ENCODE measurements at regions of chrX and their contacts with region 1.

Region 1: DNA sequence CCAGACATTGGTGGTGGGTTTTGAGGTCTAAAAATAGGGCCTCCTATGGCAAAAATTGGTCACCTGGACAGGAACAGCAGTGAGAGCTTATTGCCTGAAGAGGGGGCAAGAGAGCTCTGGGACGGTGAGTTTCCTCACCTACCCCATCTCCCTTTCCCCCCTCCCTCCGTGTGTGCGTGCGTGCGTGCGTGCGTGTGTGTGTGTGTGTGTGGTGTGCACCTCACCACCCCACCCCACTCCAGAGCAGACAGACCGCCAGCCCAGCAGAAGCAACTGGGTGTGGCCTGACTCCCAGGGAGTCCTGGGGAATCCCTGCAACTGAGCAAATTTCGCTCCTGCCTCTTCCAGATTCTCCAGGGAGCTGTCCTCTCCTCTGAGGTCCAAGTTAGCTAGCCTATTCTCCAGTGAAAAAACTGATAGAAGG is 44.7 kb downstream of the PRPS1 start:
- DNase-seq: peak; percentile 60
- H3K4me3 ChIP-seq: no peak overlapping the region
- H3K27ac ChIP-seq: peak overlapping the region in 1 of 2 donors; percentile 88
- H3K4me1 ChIP-seq: no peaks in the 10 kb centered on the region
- H3K27me3 ChIP-seq: no peaks in the 10 kb centered on the region
- CTCF ChIP-seq: peak; percentile 32 to 63 (median 45)
- POLR2A ChIP-seq: no peak

Region 2: GRCh38 chrX:107374831-107375230 is 298.1 kb before region 1 on chrX:
- intact Hi-C with region 1: no loop called
- DNase-seq: no peak
- H3K4me3 ChIP-seq: no peak overlapping the region
- H3K27ac ChIP-seq: no peak overlapping the region
- H3K4me1 ChIP-seq: no peaks in the 10 kb centered on the region
- H3K27me3 ChIP-seq: no peaks in the 10 kb centered on the region
- CTCF ChIP-seq: no peak
- POLR2A ChIP-seq: no peak

Region 3: DNA sequence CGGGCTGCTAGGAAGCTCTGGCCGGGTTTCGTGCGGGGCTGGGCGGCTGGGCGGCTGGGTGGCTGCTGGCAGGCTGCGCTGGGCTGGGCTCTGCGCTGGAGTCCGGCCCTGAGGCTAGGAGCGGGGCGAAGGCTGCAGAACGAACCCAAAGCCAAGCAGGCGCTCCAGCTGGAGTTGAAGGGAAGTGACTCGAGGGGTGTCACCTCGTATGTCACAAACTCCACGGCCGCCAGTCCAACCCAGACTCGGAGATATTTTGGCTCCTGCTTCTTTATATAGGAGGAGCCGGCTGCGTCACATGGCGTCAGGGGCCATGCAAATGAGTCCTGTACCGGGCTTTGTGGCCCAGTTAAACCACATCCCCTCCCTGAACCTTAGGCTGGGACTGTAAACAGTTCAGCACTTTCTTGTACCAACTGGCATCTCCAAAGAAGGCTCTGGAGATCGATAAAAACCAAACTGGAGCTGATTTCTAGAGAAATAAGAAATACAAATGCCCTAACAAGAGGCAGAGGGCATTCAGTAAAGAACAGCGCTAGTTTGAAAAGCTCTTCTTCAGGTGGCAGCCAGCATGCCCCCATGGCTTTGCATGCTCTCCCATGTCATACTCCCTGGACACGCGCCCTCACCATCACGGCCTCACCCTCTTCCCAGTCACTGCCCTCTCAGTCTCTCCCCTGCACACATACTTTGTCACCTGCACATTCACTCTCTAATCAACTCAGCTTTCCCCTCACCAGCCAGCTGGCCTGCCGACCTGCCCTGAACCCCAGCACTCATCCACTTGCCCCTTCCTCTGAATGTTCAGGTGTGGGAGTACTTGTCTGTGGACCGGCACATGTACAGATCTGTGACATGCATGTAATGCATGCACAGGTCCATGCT is 44.1 kb after region 1 on chrX:
- intact Hi-C with region 1: loop called (anchors 5 kb)
- DNase-seq: peak; percentile 86
- H3K4me3 ChIP-seq: peak overlapping the region; percentile 66 to 82
- H3K27ac ChIP-seq: peak overlapping the region; percentile 86 to 88
- H3K4me1 ChIP-seq: peaks cover 4% of the 10 kb centered on the region
- H3K27me3 ChIP-seq: no peaks in the 10 kb centered on the region
- CTCF ChIP-seq: no peak
- POLR2A ChIP-seq: peak; percentile 77

Region 4: DNA sequence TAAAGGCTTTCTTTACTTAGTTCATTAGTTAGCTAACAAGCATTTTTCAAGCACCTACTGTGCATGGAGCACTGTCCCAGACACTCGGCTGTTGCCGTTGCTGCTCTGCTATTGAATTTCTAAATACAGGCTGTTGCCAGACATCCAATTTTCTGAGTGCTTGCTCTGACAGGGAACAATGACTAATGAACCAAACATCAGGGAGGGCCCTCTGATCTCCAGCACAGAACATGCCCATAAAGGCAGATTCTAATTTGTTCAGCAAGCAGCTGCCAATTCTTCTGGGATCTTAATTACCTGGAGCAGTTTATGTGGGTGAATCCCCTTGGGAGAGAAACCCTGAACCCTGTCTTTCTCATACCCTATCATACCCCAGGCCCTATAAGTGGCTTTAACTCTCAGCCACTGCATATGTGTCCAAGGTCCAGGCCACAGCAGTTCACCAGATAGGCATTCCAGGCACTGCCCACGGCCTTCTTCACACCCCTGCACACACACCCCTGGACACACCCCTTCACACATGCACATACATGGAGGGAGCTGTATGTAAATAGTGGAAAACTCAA is 74.7 kb after region 1 on chrX:
- intact Hi-C with region 1: loop called (anchors 10 kb)
- DNase-seq: no peak
- H3K4me3 ChIP-seq: no peak overlapping the region
- H3K27ac ChIP-seq: peak overlapping the region; percentile 18 to 56
- H3K4me1 ChIP-seq: peaks cover 16% of the 10 kb centered on the region
- H3K27me3 ChIP-seq: no peaks in the 10 kb centered on the region
- CTCF ChIP-seq: no peak
- POLR2A ChIP-seq: no peak

Region 5: DNA sequence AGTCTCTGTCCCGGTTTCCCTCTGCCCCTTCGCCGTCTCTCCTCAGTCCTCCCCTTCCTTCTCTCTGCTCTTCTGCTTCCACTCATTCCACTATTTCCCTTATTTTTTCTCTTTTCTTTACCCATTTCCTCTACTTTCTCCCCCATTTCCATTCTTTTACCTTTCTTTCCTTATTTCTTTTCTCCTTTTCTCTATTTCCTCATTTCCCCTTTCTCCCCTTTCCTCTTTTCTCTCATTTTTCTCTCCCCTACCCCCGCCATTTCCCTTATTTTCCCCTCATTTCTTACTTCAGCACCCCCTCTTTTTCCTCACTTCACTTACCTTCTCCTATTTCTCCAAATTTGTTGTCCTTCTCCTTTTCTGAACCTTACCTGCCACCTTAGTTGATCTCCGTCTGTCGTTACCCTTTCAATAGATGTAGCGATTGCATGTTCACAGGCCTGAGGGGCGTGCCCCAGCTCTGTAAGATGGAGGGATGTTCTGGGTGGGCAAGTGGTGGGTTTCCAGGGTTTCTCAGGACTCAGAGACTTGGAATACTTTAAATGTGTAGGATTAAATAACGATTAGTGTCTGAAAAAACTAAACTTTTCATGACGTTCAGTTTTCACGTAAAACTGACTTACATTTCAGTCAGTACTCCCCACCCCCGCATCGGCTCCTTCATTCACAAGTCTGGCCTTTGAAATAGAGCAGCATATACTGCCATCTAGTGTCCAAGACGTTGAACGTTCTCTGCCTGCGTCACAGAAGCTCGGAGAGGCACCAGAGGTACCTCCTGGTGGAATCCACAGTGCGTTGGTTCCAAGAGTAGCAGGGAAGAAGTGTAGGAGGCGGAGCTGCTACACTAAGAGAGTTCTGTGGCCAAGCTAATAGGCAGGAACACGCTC is 103.9 kb after region 1 on chrX:
- intact Hi-C with region 1: loop called (anchors 10 kb)
- DNase-seq: peak; percentile 92
- H3K4me3 ChIP-seq: peak overlapping the region; percentile 46 to 61
- H3K27ac ChIP-seq: peak overlapping the region in 1 of 2 donors; percentile 75
- H3K4me1 ChIP-seq: no peaks in the 10 kb centered on the region
- H3K27me3 ChIP-seq: no peaks in the 10 kb centered on the region
- CTCF ChIP-seq: peak; percentile 54 to 78 (median 74)
- POLR2A ChIP-seq: no peak